CD8-positive, alpha-beta T cell (primary cell): ENCODE measurements at regions of chr16 and their contacts with region 1.

Region 1: GRCh38 chr16:57734925-57735754 is 430 bp upstream of the KATNB1 start:
- DNase-seq: peak; percentile 93 to 100 (median 98)
- ATAC-seq: peak; percentile 88
- H3K4me3 ChIP-seq: peak overlapping the region; percentile 84 to 99
- H3K4me3 Mint-ChIP-seq: peak overlapping the region; percentile 94
- H3K27ac ChIP-seq: peak overlapping the region; percentile 72 to 84
- H3K27ac Mint-ChIP-seq: peak overlapping the region; percentile 97
- H3K4me1 ChIP-seq: peaks cover 21% of the 10 kb centered on the region
- H3K4me1 Mint-ChIP-seq: peaks cover 30% of the 10 kb centered on the region
- H3K27me3 ChIP-seq: no peaks in the 10 kb centered on the region
- H3K27me3 Mint-ChIP-seq: no peaks in the 10 kb centered on the region
- CTCF ChIP-seq: no peak

Region 2: DNA sequence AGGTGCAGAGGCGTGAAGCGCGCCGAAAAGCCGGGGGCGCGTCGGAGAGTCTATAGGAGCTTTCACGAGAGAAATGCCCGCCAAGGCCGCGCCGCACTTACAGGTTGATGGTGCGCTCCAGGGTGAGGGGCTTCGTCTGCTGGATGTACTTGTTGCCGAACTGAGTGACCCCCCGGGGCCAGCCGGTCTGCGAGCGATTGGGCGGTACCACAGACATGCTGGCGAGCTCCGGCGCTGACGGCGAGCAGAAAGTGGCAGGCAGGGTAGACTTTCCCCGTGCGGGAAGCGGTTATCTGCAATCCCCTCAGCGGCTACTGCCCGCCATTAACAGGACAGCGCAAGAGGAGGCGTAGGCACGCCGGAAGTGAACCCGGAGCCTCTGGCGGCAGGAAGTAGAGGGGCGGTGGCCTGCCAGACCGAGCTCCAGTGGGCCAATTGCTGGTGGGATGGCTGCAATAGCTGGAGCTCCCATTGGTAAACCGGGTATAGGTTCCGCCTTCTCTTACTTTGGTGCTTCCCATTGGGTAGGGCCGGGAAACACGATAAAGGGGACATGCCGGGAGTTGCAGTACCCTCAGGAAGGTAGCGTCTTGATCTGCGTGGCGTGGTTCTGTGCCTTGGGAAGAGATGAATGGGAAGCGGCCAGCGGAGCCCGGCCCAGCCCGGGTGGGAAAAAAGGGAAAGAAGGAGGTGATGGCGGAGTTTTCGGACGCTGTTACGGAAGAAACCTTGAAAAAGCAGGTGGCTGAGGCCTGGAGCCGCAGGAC is 1284.0 kb before region 1 on chr16 and contains the starts of genes NUDT21 and OGFOD1:
- CTCF ChIA-PET with region 1: no interaction called
- POLR2A ChIA-PET with region 1: no interaction called
- intact Hi-C with region 1: loop called in 1 of 2 experiments (anchors 2 kb)
- DNase-seq: peak; percentile 82 to 98 (median 90)
- ATAC-seq: peak; percentile 98
- H3K4me3 ChIP-seq: peak within 1 kb of the TSS; percentile 85 to 87
- H3K4me3 Mint-ChIP-seq: peak within 1 kb of the TSS; percentile 97
- H3K27ac ChIP-seq: peak within 1 kb of the TSS; percentile 76 to 77
- H3K27ac Mint-ChIP-seq: peak within 1 kb of the TSS; percentile 94
- H3K4me1 ChIP-seq: peaks cover 31% of the 10 kb centered on the region
- H3K4me1 Mint-ChIP-seq: peaks cover 60% of the 10 kb centered on the region
- H3K27me3 ChIP-seq: no peaks in the 10 kb centered on the region
- H3K27me3 Mint-ChIP-seq: no peaks in the 10 kb centered on the region
- CTCF ChIP-seq: no peak
- total RNA-seq, gene NUDT21: 99.1 to 106 TPM
- total RNA-seq, gene OGFOD1: 17.0 to 21.5 TPM

Region 3: DNA sequence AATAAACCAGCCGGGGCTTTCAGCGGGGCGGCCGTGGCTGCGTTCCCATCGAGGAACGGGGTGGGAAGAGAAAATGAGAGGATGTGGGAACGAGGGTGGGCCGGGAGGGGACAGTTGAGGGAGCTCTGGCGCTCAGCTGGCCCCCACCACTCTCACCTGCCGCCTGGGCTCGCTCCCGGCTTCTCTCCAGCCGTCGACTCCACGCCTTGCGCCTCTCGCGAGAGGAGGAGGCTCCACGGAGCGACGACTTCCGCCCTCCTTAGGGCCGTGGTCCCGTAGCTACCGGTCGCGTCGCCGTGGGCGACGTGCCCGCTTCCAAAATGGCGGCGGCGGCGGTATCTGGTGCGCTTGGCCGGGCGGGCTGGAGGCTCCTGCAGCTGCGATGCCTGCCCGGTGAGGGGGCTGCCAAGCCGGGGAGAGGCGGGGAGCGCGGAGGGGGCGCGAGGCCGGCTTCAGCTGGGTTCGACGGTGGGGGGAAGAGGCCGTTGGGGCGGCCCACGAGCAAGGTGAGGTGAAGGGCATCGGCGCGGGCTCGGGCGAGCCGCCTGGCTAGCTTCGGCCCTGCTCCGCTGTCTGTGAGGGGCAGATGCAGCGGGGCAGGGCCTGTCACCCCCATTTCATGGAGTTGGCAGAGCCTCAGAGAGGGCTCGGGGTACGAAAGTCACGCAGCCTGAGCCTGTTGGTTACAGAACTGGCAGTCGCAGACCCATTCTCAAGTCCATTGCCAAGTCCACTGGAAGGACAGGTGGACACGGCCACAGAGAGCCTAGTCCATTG is 287.8 kb before region 1 on chr16 and contains the starts of genes CIAPIN1 and COQ9:
- CTCF ChIA-PET with region 1: no interaction called
- POLR2A ChIA-PET with region 1: no interaction called
- intact Hi-C with region 1: loop called in 1 of 2 experiments (anchors 2 kb)
- DNase-seq: peak; percentile 85 to 97 (median 92)
- ATAC-seq: peak; percentile 98
- H3K4me3 ChIP-seq: peak within 1 kb of the TSS; percentile 93 to 96
- H3K4me3 Mint-ChIP-seq: peak within 1 kb of the TSS; percentile 91
- H3K27ac ChIP-seq: peak within 1 kb of the TSS; percentile 79 to 83
- H3K27ac Mint-ChIP-seq: peak within 1 kb of the TSS; percentile 93
- H3K4me1 ChIP-seq: peaks cover 20% of the 10 kb centered on the region
- H3K4me1 Mint-ChIP-seq: peaks cover 53% of the 10 kb centered on the region
- H3K27me3 ChIP-seq: no peaks in the 10 kb centered on the region
- H3K27me3 Mint-ChIP-seq: no peaks in the 10 kb centered on the region
- CTCF ChIP-seq: no peak
- total RNA-seq, gene CIAPIN1: 28.6 to 29.7 TPM
- total RNA-seq, gene COQ9: 8.1 to 11.7 TPM

Region 4: GRCh38 chr16:57648590-57649442 is 86.3 kb before region 1 on chr16:
- CTCF ChIA-PET with region 1: interaction called, 14 read pairs
- POLR2A ChIA-PET with region 1: no interaction called
- intact Hi-C with region 1: no loop called
- DNase-seq: peak; percentile 77 to 94 (median 86)
- ATAC-seq: peak; percentile 84
- H3K4me3 ChIP-seq: peak overlapping the region in 1 of 2 experiments; percentile 53
- H3K4me3 Mint-ChIP-seq: peak overlapping the region; percentile 29
- H3K27ac ChIP-seq: peak overlapping the region in 1 of 2 experiments; percentile 69
- H3K27ac Mint-ChIP-seq: peak overlapping the region; percentile 64
- H3K4me1 ChIP-seq: peaks cover 29% of the 10 kb centered on the region
- H3K4me1 Mint-ChIP-seq: peaks cover 37% of the 10 kb centered on the region
- H3K27me3 ChIP-seq: no peaks in the 10 kb centered on the region
- H3K27me3 Mint-ChIP-seq: no peaks in the 10 kb centered on the region
- CTCF ChIP-seq: peak; percentile 100

Region 5: GRCh38 chr16:57712027-57712392 is 23.1 kb before region 1 on chr16:
- CTCF ChIA-PET with region 1: no interaction called
- POLR2A ChIA-PET with region 1: no interaction called
- intact Hi-C with region 1: no loop called
- DNase-seq: no peak
- ATAC-seq: no peak
- H3K4me3 ChIP-seq: no peak overlapping the region
- H3K4me3 Mint-ChIP-seq: no peak overlapping the region
- H3K27ac ChIP-seq: no peak overlapping the region
- H3K27ac Mint-ChIP-seq: no peak overlapping the region
- H3K4me1 ChIP-seq: no peaks in the 10 kb centered on the region
- H3K4me1 Mint-ChIP-seq: no peaks in the 10 kb centered on the region
- H3K27me3 ChIP-seq: no peaks in the 10 kb centered on the region
- H3K27me3 Mint-ChIP-seq: no peaks in the 10 kb centered on the region
- CTCF ChIP-seq: no peak

Region 6: DNA sequence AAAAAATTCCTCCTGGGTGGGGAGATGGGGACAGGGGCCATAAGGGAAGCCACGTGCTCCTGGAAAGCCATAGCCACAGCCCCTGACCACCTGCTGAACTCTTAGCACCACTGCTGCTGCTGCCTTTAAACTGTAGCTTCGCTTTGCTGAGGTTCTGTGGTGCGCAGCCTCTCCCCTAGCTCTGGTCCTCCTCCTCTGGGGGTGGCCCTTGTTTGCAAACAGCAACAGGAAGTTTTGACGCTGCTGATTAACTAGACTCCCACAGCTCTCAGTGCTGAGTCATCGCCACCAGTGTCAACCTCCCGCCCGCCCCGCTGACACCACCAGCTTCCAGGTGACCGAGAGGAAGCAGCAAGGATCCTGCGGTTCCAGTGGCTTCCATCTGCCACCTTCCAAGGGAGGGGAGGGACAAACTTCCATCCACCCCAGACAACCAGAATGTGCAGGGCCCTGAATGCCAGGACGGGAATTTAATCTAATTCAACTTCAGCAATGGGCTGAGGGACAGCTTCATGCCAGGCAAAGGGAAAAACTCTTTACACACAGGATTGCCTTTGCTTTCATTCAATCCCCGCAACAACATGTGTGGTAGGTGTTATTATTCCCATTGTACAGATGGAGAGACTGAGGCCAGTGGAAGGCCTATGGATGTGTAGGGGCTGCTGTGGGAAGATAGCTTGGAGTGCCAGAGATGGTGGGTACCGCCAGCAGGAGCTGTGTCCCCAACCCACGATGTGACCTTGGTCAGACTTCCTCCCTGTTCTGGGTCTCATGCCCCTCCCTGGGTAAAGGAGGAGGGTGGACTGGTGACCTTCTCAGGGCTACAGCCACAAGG is 75.3 kb after region 1 on chr16:
- CTCF ChIA-PET with region 1: no interaction called
- POLR2A ChIA-PET with region 1: no interaction called
- intact Hi-C with region 1: loop called (anchors 1 to 5 kb)
- DNase-seq: peak; percentile 54 to 93 (median 81)
- ATAC-seq: peak; percentile 96
- H3K4me3 ChIP-seq: no peak overlapping the region
- H3K4me3 Mint-ChIP-seq: peak overlapping the region; percentile 27
- H3K27ac ChIP-seq: peak overlapping the region in 1 of 2 experiments; percentile 74
- H3K27ac Mint-ChIP-seq: peak overlapping the region; percentile 87
- H3K4me1 ChIP-seq: peaks cover 26% of the 10 kb centered on the region
- H3K4me1 Mint-ChIP-seq: peaks cover 23% of the 10 kb centered on the region
- H3K27me3 ChIP-seq: no peaks in the 10 kb centered on the region
- H3K27me3 Mint-ChIP-seq: peaks cover 17% of the 10 kb centered on the region
- CTCF ChIP-seq: no peak

Region 7: GRCh38 chr16:58129097-58129936 is 394.2 kb after region 1 on chr16 and contains the start of gene CFAP20:
- CTCF ChIA-PET with region 1: no interaction called
- POLR2A ChIA-PET with region 1: interaction called, 4 read pairs
- intact Hi-C with region 1: loop called (anchors 1 to 5 kb)
- DNase-seq: peak; percentile 92 to 98 (median 96)
- ATAC-seq: peak; percentile 90
- H3K4me3 ChIP-seq: peak within 1 kb of the TSS; percentile 75 to 95
- H3K4me3 Mint-ChIP-seq: peak within 1 kb of the TSS; percentile 99
- H3K27ac ChIP-seq: peak within 1 kb of the TSS; percentile 82 to 91
- H3K27ac Mint-ChIP-seq: peak within 1 kb of the TSS; percentile 98
- H3K4me1 ChIP-seq: peaks cover 30% of the 10 kb centered on the region
- H3K4me1 Mint-ChIP-seq: peaks cover 44% of the 10 kb centered on the region
- H3K27me3 ChIP-seq: no peaks in the 10 kb centered on the region
- H3K27me3 Mint-ChIP-seq: no peaks in the 10 kb centered on the region
- CTCF ChIP-seq: no peak
- total RNA-seq, gene CFAP20: 102 to 104 TPM